K562 (cell line): ENCODE measurements at regions of chr20 and their contacts with region 1.

Region 1: DNA sequence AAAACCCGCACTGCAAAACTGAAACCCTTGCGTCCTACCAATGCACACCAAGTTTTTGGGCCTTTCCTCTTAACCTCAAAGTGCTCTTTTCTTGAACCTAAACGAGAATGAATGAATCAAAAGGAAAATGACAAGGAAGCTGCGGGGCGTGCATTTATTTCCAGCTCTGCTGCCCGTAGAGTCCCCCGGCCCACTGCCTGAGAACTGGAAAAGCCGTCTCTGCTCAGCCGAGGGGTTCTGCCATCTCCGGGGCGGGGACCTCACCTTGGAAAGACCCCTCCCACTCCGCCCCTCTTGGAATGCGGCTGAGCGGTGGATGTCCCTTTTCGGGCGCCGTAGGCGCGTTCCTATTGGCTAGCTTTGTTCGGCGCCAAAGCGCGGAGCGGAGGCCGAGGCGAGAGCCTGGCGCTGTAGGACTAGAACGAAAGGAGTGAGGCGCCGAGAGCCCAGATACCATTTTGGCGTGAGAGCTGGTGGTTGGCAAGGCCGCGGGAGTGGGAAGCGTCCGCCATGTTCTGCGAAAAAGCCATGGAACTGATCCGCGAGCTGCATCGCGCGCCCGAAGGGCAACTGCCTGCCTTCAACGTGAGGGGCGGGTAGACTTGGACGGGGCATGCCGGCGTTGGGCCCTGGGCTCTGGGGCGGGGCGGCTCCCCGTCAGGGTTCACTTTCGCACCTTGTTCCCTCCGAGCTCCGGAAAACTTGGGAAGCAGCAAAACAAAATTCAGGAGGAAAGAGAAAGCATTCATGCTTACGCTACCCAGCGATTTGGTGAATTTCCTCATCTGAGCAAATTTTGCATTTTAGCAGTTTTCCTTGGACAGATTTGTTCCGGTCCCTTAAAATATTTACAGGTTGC is at the start of gene GINS1:
- DNase-seq: peak; percentile 89 to 93 (median 92)
- ATAC-seq: peak; percentile 97
- H3K4me3 ChIP-seq: peak within 1 kb of the TSS; percentile 61
- H3K27ac ChIP-seq: peak within 1 kb of the TSS; percentile 88
- H3K4me1 ChIP-seq: peaks cover 6 to 8% of the 10 kb centered on the region in 2 experiments; a peak in 3 of 5 replicates
- H3K27me3 ChIP-seq: no peaks in the 10 kb centered on the region
- CTCF ChIP-seq: no peak
- EP300 ChIP-seq: no peak
- POLR2A ChIP-seq: peak; percentile 89
- RAD21 ChIP-seq: no peak
- polyA plus RNA-seq, gene GINS1: 13.1 to 25.8 TPM

Region 2: DNA sequence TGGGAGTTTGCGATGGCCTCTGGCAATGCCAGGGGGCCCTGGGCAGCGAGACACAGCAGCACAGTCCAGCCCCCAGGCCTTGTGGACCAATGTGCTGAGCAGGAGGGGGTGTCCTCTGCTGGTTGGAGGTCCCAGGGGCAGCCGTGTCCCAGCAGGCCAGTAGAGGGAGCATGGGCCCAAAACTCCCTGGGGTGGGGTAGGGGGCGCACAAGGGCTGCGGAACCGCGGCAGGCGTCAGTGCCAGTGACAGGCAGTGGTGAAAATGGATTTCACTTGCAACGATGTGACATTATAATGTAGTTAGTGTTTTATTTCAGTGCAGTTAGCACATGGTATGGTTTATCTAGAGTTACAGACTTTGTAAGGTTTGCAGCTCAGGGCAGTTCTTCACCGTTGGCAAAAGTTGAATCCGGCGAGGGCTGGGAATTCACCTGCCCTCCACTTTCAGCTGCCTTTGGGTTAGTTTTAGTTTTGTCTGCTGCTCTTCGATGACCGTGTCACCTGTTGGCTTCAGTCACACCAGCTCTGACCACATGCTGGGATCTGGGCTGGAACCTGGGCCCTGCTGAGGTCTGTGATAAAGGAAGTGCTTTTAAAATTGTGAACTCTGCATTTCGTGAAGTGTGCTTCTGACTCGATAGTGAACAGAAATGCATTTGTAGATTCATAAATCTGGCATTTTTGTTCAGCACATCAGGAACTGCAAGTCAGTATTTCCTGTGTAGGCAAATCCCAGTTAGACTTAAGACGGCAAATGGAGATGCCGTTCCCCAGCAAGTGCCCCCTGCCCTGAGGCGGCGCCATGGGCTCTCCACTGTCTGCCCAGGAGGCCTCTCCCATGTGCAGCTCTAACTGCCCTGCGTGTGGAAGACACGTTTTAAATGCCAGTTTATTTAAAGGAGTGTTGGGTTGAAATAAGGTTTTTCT is 112.8 kb before region 1 on chr20:
- CTCF ChIA-PET with region 1: no interaction called
- POLR2A ChIA-PET with region 1: interaction called, 3 read pairs
- in situ Hi-C with region 1: loop called (anchors 5 kb)
- intact Hi-C with region 1: no loop called
- DNase-seq: peak; percentile 72 to 83 (median 79)
- ATAC-seq: peak; percentile 96
- H3K4me3 ChIP-seq: no peak overlapping the region
- H3K27ac ChIP-seq: no peak overlapping the region
- H3K4me1 ChIP-seq: peaks cover 0 to 11% of the 10 kb centered on the region in 2 experiments; a peak in 3 of 5 replicates
- H3K27me3 ChIP-seq: no peaks in the 10 kb centered on the region
- CTCF ChIP-seq: peak; percentile 94 to 100 (median 100)
- EP300 ChIP-seq: no peak
- POLR2A ChIP-seq: no peak
- RAD21 ChIP-seq: peak; percentile 42 to 84

Region 3: GRCh38 chr20:25390538-25391528 is 16.7 kb before region 1 on chr20 and contains the start of gene ABHD12:
- CTCF ChIA-PET with region 1: no interaction called
- POLR2A ChIA-PET with region 1: interaction called, 13 read pairs
- in situ Hi-C with region 1: no loop called
- intact Hi-C with region 1: no loop called
- DNase-seq: peak; percentile 92 to 95 (median 93)
- ATAC-seq: peak; percentile 96
- H3K4me3 ChIP-seq: peak within 1 kb of the TSS; percentile 62
- H3K27ac ChIP-seq: peak within 1 kb of the TSS; percentile 78
- H3K4me1 ChIP-seq: peaks cover 0 to 10% of the 10 kb centered on the region in 2 experiments; a peak in 3 of 5 replicates
- H3K27me3 ChIP-seq: no peaks in the 10 kb centered on the region
- CTCF ChIP-seq: no peak
- EP300 ChIP-seq: no peak
- POLR2A ChIP-seq: peak; percentile 80
- RAD21 ChIP-seq: no peak
- polyA plus RNA-seq, gene ABHD12: 0.65 to 1.2 TPM

Region 4: GRCh38 chr20:25444556-25444955 is 37.0 kb after region 1 on chr20:
- CTCF ChIA-PET with region 1: no interaction called
- POLR2A ChIA-PET with region 1: no interaction called
- in situ Hi-C with region 1: no loop called
- intact Hi-C with region 1: no loop called
- DNase-seq: no peak
- ATAC-seq: no peak
- H3K4me3 ChIP-seq: no peak overlapping the region
- H3K27ac ChIP-seq: no peak overlapping the region
- H3K4me1 ChIP-seq: no peaks in the 10 kb centered on the region
- H3K27me3 ChIP-seq: no peaks in the 10 kb centered on the region
- CTCF ChIP-seq: no peak
- EP300 ChIP-seq: no peak
- POLR2A ChIP-seq: no peak
- RAD21 ChIP-seq: no peak